HepG2 (cell line): ENCODE measurements at regions of chr2 and their contacts with region 1.

Region 1: DNA sequence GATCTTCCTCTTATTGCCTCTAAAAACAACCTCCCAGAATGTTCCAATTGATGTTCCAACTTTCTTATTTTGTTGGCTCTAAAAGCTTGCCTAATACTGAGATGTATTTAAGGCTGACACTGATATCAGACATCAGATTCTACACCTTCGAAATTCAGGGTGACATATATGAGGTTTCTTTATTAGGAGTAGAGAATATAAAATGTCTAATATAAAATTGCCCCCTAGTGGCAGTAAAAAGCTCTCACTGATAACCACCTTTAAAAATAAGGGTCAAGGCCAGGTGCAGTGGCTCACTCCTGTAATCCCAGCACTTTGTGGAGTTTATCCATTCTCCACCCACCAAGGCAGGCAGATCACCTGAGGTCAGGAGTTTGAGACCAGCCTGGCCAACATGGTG is 789.7 kb upstream of the SLC39A10 start:
- DNase-seq: no peak
- ATAC-seq: peak; percentile 52
- H3K4me3 ChIP-seq: no peak overlapping the region
- H3K27ac ChIP-seq: no peak overlapping the region
- H3K4me1 ChIP-seq: no peaks in the 10 kb centered on the region
- H3K27me3 ChIP-seq: no peaks in the 10 kb centered on the region
- CTCF ChIP-seq: 0 out of 2 replicates have a peak, but pooled peaks have one; percentile 11
- EP300 ChIP-seq: no peak
- POLR2A ChIP-seq: no peak
- RAD21 ChIP-seq: no peak

Region 2: GRCh38 chr2:194545978-194546377 is 321.4 kb before region 1 on chr2:
- CTCF ChIA-PET with region 1: no interaction called
- POLR2A ChIA-PET with region 1: no interaction called
- in situ Hi-C with region 1: no loop called
- intact Hi-C with region 1: loop called (anchors 5 kb)
- DNase-seq: peak; percentile 4
- ATAC-seq: no peak
- H3K4me3 ChIP-seq: no peak overlapping the region
- H3K27ac ChIP-seq: no peak overlapping the region
- H3K4me1 ChIP-seq: no peaks in the 10 kb centered on the region
- H3K27me3 ChIP-seq: no peaks in the 10 kb centered on the region
- CTCF ChIP-seq: no peak; the same call in 1 of the 2 replicates
- EP300 ChIP-seq: no peak
- POLR2A ChIP-seq: no peak
- RAD21 ChIP-seq: no peak

Region 3: DNA sequence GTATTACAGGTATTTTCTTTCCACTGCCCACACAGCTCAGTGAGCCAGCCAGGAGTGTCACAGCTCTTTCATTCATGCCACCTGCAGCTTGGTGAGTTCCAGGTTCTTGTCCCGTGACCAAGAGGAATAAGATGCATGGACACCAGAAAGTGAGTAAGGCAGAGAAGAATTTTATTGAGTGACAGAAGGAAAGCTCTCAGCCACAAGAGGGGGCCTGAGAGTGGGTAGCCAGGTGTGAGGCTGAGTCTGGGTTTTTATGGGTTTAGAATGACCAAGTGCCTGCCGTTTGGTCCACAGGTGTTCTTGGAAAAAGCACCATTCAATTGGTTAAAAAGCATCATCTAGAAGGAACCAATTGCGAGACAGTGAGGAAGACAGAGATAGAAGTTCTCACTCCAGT is 307.4 kb before region 1 on chr2:
- CTCF ChIA-PET with region 1: no interaction called
- POLR2A ChIA-PET with region 1: no interaction called
- in situ Hi-C with region 1: no loop called
- intact Hi-C with region 1: no loop called
- DNase-seq: no peak
- ATAC-seq: no peak
- H3K4me3 ChIP-seq: no peak overlapping the region
- H3K27ac ChIP-seq: no peak overlapping the region
- H3K4me1 ChIP-seq: no peaks in the 10 kb centered on the region
- H3K27me3 ChIP-seq: no peaks in the 10 kb centered on the region
- CTCF ChIP-seq: no peak
- EP300 ChIP-seq: no peak
- POLR2A ChIP-seq: no peak
- RAD21 ChIP-seq: no peak

Region 4: GRCh38 chr2:194819344-194819743 is 48.0 kb before region 1 on chr2:
- CTCF ChIA-PET with region 1: no interaction called
- POLR2A ChIA-PET with region 1: no interaction called
- in situ Hi-C with region 1: no loop called
- intact Hi-C with region 1: no loop called
- DNase-seq: no peak
- ATAC-seq: no peak
- H3K4me3 ChIP-seq: no peak overlapping the region
- H3K27ac ChIP-seq: no peak overlapping the region
- H3K4me1 ChIP-seq: no peaks in the 10 kb centered on the region
- H3K27me3 ChIP-seq: no peaks in the 10 kb centered on the region
- CTCF ChIP-seq: no peak
- EP300 ChIP-seq: no peak
- POLR2A ChIP-seq: no peak
- RAD21 ChIP-seq: no peak